ENCODE measurements at regions of chr12 and their contacts with region 1.

Region 1: DNA sequence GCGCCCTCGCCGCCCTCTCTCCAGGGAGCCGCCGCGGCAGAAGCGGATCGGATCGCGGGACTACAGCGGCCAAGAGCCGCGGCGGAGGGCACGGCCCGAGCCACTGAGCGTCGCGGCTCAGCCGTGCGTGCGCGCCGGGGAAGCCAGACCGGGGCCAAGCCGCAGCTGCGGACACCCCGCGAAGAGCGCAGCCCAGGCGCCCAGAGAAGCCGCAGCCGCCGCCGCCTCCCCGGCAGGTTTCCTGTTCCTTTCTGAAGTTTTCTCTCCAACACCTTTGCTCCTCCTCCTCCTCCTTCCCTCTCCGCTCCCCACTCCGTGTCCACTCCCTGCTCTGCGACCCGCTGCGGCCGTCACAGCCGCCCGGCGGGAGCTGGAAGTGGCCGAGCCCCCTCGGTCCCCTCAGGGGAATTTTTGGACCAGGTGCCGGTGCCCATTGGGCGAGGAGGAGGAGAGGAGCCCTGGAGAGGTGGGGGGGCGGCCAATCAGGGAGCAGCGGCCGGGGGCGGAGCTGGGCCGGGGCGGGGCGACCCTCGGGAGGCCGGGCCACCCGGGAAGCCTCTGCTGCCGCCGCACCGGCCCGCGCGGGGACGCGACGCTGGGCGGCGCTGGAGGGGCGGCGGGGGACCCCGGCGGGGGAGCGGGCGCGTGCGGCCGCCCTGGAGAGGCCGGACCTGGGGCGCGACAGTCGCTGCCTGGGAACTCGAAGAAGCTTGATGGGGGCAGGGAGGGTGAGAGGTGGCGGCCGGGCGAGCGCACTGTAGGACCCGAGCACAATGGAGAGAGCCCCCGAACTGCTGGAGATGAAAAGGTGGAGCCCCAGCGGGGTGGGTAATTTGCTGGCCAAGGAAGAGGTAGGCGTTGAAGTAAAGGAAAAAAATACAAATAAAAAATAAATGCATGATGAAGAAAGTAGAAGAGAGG is at the start of gene ITPR2:
- DNase-seq: peak; percentile 80 to 95 (median 92)
- ATAC-seq: peak; percentile 92
- H3K4me3 ChIP-seq: peak within 1 kb of the TSS; percentile 63 to 89
- H3K4me3 Mint-ChIP-seq: peak within 1 kb of the TSS; percentile 97
- H3K27ac ChIP-seq: peak within 1 kb of the TSS; percentile 66 to 87
- H3K27ac Mint-ChIP-seq: peak within 1 kb of the TSS; percentile 98
- H3K4me1 ChIP-seq: peaks cover 9% of the 10 kb centered on the region
- H3K4me1 Mint-ChIP-seq: peaks cover 44% of the 10 kb centered on the region
- H3K27me3 ChIP-seq: no peaks in the 10 kb centered on the region
- H3K27me3 Mint-ChIP-seq: no peaks in the 10 kb centered on the region
- CTCF ChIP-seq: no peak
- total RNA-seq, gene ITPR2: 18.9 to 24.1 TPM

Region 2: GRCh38 chr12:25052196-25052913 is 1780.7 kb before region 1 on chr12:
- CTCF ChIA-PET with region 1: no interaction called
- POLR2A ChIA-PET with region 1: interaction called, 3 read pairs
- intact Hi-C with region 1: loop called (anchors 10 kb)
- DNase-seq: peak; percentile 20 to 90 (median 51)
- ATAC-seq: peak; percentile 70
- H3K4me3 ChIP-seq: peak overlapping the region; percentile 67 to 76
- H3K4me3 Mint-ChIP-seq: peak overlapping the region; percentile 97
- H3K27ac ChIP-seq: peak overlapping the region; percentile 79 to 92
- H3K27ac Mint-ChIP-seq: peak overlapping the region; percentile 98
- H3K4me1 ChIP-seq: peaks cover 38% of the 10 kb centered on the region
- H3K4me1 Mint-ChIP-seq: peaks cover 41% of the 10 kb centered on the region
- H3K27me3 ChIP-seq: no peaks in the 10 kb centered on the region
- H3K27me3 Mint-ChIP-seq: no peaks in the 10 kb centered on the region
- CTCF ChIP-seq: no peak

Region 3: GRCh38 chr12:26126340-26127284 is 706.5 kb before region 1 on chr12:
- CTCF ChIA-PET with region 1: no interaction called
- POLR2A ChIA-PET with region 1: no interaction called
- intact Hi-C with region 1: loop called in 1 of 2 experiments (anchors 10 kb)
- DNase-seq: peak in 2 of 9 experiments; percentile 33 to 35
- ATAC-seq: no peak
- H3K4me3 ChIP-seq: peak overlapping the region in 1 of 2 experiments; percentile 39
- H3K4me3 Mint-ChIP-seq: peak overlapping the region; percentile 78
- H3K27ac ChIP-seq: no peak overlapping the region
- H3K27ac Mint-ChIP-seq: no peak overlapping the region
- H3K4me1 ChIP-seq: peaks cover 29% of the 10 kb centered on the region
- H3K4me1 Mint-ChIP-seq: peaks cover 40% of the 10 kb centered on the region
- H3K27me3 ChIP-seq: peaks cover 24 to 52% of the 10 kb centered on the region in 2 experiments
- H3K27me3 Mint-ChIP-seq: peaks cover 66% of the 10 kb centered on the region
- CTCF ChIP-seq: no peak

Region 4: DNA sequence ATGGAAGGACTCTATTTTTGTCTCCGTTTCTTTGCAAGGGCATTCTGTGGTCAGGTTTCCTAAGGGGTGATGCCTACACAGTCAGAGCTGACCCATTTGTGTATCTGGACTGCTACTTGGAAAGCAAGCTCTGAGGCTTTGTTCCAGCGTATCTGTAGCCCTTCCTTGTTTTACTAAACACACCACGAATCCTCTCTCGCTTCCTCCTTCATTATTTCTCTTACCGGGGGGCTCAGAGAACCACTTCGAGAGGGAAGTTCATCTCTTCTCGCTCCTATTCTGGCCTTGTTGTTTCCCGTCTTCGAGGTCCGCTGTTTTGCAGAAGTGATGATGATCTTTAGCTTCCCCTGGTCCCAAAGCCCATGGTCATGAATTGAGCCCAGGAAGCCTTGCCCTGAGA is 473.0 kb before region 1 on chr12:
- CTCF ChIA-PET with region 1: no interaction called
- POLR2A ChIA-PET with region 1: no interaction called
- intact Hi-C with region 1: no loop called
- DNase-seq: no peak
- ATAC-seq: no peak
- H3K4me3 ChIP-seq: no peak overlapping the region
- H3K4me3 Mint-ChIP-seq: no peak overlapping the region
- H3K27ac ChIP-seq: no peak overlapping the region
- H3K27ac Mint-ChIP-seq: no peak overlapping the region
- H3K4me1 ChIP-seq: no peaks in the 10 kb centered on the region
- H3K4me1 Mint-ChIP-seq: no peaks in the 10 kb centered on the region
- H3K27me3 ChIP-seq: no peaks in the 10 kb centered on the region
- H3K27me3 Mint-ChIP-seq: no peaks in the 10 kb centered on the region
- CTCF ChIP-seq: no peak

Region 5: GRCh38 chr12:26773313-26774104 is 59.6 kb before region 1 on chr12:
- CTCF ChIA-PET with region 1: no interaction called
- POLR2A ChIA-PET with region 1: no interaction called
- intact Hi-C with region 1: no loop called
- DNase-seq: no peak
- ATAC-seq: no peak
- H3K4me3 ChIP-seq: no peak overlapping the region
- H3K4me3 Mint-ChIP-seq: no peak overlapping the region
- H3K27ac ChIP-seq: no peak overlapping the region
- H3K27ac Mint-ChIP-seq: no peak overlapping the region
- H3K4me1 ChIP-seq: no peaks in the 10 kb centered on the region
- H3K4me1 Mint-ChIP-seq: peaks cover 18% of the 10 kb centered on the region
- H3K27me3 ChIP-seq: no peaks in the 10 kb centered on the region
- H3K27me3 Mint-ChIP-seq: no peaks in the 10 kb centered on the region
- CTCF ChIP-seq: no peak

Region 6: DNA sequence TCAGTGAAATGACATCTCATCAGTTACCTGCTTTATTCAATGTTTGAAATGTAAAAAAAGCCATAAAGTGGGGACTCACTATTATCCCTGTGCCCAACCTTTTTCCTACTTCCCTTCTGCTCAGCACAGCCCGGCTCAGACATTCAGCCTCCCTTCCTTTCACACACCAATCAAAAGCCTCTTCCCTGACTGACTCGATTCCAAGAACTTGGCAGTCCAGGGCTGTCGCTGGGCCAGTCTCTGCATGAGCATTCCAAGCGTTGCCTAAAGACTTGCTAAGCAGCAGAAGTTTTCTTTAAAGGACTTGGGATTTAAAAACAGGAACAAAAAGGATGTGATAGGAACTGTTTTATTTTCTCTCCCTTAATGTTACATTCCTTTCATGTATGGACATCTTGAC is 22.8 kb before region 1 on chr12:
- CTCF ChIA-PET with region 1: no interaction called
- POLR2A ChIA-PET with region 1: no interaction called
- intact Hi-C with region 1: no loop called
- DNase-seq: no peak
- ATAC-seq: no peak
- H3K4me3 ChIP-seq: no peak overlapping the region
- H3K4me3 Mint-ChIP-seq: no peak overlapping the region
- H3K27ac ChIP-seq: no peak overlapping the region
- H3K27ac Mint-ChIP-seq: no peak overlapping the region
- H3K4me1 ChIP-seq: no peaks in the 10 kb centered on the region
- H3K4me1 Mint-ChIP-seq: peaks cover 20% of the 10 kb centered on the region
- H3K27me3 ChIP-seq: no peaks in the 10 kb centered on the region
- H3K27me3 Mint-ChIP-seq: no peaks in the 10 kb centered on the region
- CTCF ChIP-seq: no peak

Region 7: GRCh38 chr12:26845057-26845666 is 12.1 kb after region 1 on chr12:
- CTCF ChIA-PET with region 1: interaction called, 15 read pairs
- POLR2A ChIA-PET with region 1: interaction called, 5 read pairs
- intact Hi-C with region 1: loop called in 1 of 2 experiments (anchors 1 kb)
- DNase-seq: peak in 5 of 9 experiments; percentile 25 to 46 (median 31)
- ATAC-seq: no peak
- H3K4me3 ChIP-seq: no peak overlapping the region
- H3K4me3 Mint-ChIP-seq: no peak overlapping the region
- H3K27ac ChIP-seq: no peak overlapping the region
- H3K27ac Mint-ChIP-seq: no peak overlapping the region
- H3K4me1 ChIP-seq: no peaks in the 10 kb centered on the region
- H3K4me1 Mint-ChIP-seq: peaks cover 6% of the 10 kb centered on the region
- H3K27me3 ChIP-seq: no peaks in the 10 kb centered on the region
- H3K27me3 Mint-ChIP-seq: peaks cover 4% of the 10 kb centered on the region
- CTCF ChIP-seq: peak; percentile 50

Region 8: DNA sequence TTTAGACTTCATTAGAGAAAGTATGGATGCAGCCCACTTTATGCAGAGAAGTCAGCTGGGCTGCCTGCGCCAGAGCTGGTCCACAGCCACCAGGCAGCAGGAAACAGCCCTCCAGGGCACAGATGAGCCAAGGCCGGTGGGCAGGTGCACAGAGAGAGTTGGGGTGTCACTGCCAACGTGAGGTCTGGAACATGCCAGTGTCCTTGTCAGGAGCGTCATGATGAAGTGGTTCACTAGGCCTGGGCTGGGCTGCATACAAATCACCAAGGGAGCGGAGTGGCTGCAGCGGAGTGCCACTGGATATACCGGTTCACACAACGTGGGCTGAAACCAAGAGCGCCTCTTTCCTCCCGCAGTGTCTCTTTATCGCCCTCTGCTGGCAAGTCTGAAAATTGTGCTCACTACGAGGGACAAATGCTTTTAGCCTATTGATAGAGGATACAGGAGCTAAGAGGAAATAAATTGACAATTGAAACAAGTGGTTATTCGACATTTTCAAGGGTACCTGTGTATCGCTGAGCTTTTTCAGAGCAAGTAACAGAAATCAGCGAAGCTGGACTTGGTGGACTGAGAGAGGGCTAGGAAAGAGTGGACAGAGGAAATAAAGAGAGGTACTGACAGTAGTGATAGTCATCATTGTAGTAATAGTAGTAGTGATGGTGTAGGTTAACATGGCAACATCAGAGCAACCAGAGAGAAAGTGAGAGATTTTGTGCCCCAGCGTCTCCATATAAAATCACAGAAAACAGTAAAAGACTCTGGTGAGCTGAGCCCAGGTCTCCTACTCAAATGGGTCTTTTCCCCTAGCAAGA is 51.9 kb after region 1 on chr12:
- CTCF ChIA-PET with region 1: interaction called, 19 read pairs
- POLR2A ChIA-PET with region 1: interaction called, 3 read pairs
- intact Hi-C with region 1: loop called in 1 of 2 experiments (anchors 10 kb)
- DNase-seq: peak; percentile 59 to 89 (median 82)
- ATAC-seq: peak; percentile 99
- H3K4me3 ChIP-seq: peak overlapping the region; percentile 18 to 21
- H3K4me3 Mint-ChIP-seq: peak overlapping the region; percentile 70
- H3K27ac ChIP-seq: no peak overlapping the region
- H3K27ac Mint-ChIP-seq: no peak overlapping the region
- H3K4me1 ChIP-seq: no peaks in the 10 kb centered on the region
- H3K4me1 Mint-ChIP-seq: peaks cover 8% of the 10 kb centered on the region
- H3K27me3 ChIP-seq: no peaks in the 10 kb centered on the region
- H3K27me3 Mint-ChIP-seq: peaks cover 6% of the 10 kb centered on the region
- CTCF ChIP-seq: peak; percentile 98

Region 9: DNA sequence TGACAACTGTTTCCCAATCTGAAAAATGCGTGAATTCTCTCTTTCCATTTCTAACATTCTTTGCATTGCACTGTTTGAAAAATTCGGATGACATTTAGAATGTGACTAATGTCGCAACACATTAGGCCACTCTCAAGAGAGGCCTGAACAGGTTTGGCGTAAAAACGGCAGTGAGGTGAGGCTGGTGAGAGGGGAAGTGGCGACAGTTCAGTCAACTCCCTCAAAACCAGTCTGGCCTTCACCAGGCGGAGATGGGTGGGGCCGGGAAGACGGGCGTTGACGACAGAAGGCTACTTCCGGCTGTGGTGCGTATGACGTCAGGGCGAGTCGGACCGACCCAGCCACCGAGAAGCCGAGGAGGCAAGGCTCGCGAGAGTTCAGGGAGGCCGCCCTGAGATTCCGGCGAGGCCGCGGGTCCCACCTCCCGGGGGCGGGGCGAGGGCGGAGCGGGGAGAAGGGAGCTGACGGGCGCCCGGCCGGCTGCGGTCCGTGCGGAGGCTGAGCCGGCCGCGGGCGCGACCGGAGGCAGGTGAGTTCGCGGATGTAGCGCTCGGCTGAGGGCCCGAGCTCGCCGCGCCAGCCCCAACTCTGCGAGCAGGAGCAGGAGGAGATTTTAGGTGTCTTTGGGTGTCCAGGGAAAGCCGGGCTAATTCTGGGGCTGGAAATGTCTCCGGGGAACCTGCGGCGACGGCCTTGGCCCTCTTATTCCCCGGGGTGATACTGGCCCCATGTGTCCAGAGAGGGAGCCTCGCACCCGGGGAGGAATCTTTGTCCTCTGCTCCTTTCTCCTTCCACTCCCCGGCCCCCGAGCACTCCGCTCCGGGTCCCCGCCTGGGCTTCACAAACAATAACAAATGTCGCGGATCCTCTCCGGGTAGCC is 411.0 kb after region 1 on chr12 and contains the start of gene STK38L:
- CTCF ChIA-PET with region 1: no interaction called
- POLR2A ChIA-PET with region 1: interaction called, 8 read pairs
- intact Hi-C with region 1: loop called (anchors 2 to 5 kb)
- DNase-seq: peak; percentile 90 to 99 (median 98)
- ATAC-seq: peak; percentile 95
- H3K4me3 ChIP-seq: peak within 1 kb of the TSS; percentile 84 to 89
- H3K4me3 Mint-ChIP-seq: peak within 1 kb of the TSS; percentile 96
- H3K27ac ChIP-seq: peak within 1 kb of the TSS; percentile 76
- H3K27ac Mint-ChIP-seq: peak within 1 kb of the TSS; percentile 96
- H3K4me1 ChIP-seq: peaks cover 14% of the 10 kb centered on the region
- H3K4me1 Mint-ChIP-seq: peaks cover 52% of the 10 kb centered on the region
- H3K27me3 ChIP-seq: no peaks in the 10 kb centered on the region
- H3K27me3 Mint-ChIP-seq: no peaks in the 10 kb centered on the region
- CTCF ChIP-seq: no peak
- total RNA-seq, gene STK38L: 27.0 to 28.6 TPM

Region 10: DNA sequence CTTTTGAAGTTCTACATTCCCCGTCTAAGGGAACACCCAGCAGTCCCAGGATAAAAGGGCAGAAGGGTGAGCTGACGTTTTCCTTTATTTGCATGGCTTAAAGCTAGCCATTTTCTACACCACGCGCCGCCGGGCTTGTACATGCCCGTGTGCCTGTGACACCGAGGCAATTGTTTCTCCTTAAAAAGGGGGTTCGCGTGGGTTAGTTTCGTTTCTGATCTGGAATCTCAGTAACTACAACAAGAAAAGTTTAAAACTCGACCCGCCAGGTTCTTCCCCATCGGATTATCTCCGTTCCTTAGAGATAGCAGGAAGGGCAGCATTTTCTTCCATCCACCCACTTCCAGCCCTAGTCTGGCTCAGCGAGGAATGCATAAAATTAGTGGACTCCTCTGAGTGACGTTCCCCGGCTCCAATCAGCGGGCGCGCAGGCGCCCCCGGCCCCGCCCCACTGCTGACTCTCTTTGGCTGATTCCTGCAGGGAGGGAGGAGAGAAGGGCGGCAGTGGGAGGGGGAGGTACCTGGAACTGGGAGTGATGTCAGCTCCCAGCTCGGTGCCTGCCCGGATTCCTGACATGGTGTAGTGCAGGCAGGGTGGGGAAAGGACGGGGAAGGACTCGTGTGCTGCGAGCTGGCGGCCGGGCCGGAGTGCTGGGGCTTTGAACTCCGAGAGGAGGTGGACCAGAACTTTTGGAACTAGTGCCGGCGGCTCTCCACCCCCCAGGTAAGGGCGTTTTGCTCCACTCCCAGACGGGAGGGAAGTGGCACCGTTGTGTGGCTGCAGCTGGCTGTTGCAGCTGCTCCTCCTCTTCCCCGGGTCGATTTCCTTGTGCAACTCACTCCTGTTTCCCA is 690.8 kb after region 1 on chr12 and contains the start of gene PPFIBP1:
- CTCF ChIA-PET with region 1: no interaction called
- POLR2A ChIA-PET with region 1: no interaction called
- intact Hi-C with region 1: loop called (anchors 5 kb)
- DNase-seq: peak; percentile 93 to 100 (median 98)
- ATAC-seq: peak; percentile 96
- H3K4me3 ChIP-seq: peak within 1 kb of the TSS; percentile 89 to 91
- H3K4me3 Mint-ChIP-seq: peak within 1 kb of the TSS; percentile 98
- H3K27ac ChIP-seq: peak within 1 kb of the TSS; percentile 76 to 80
- H3K27ac Mint-ChIP-seq: peak within 1 kb of the TSS; percentile 96
- H3K4me1 ChIP-seq: peaks cover 14% of the 10 kb centered on the region
- H3K4me1 Mint-ChIP-seq: peaks cover 24% of the 10 kb centered on the region
- H3K27me3 ChIP-seq: no peaks in the 10 kb centered on the region
- H3K27me3 Mint-ChIP-seq: peaks cover 8% of the 10 kb centered on the region
- CTCF ChIP-seq: no peak
- total RNA-seq, gene PPFIBP1: 1.1 to 1.9 TPM